Endothelial cell of umbilical vein (primary cell): ENCODE measurements at regions of chr2 and their contacts with region 1.

Region 1: DNA sequence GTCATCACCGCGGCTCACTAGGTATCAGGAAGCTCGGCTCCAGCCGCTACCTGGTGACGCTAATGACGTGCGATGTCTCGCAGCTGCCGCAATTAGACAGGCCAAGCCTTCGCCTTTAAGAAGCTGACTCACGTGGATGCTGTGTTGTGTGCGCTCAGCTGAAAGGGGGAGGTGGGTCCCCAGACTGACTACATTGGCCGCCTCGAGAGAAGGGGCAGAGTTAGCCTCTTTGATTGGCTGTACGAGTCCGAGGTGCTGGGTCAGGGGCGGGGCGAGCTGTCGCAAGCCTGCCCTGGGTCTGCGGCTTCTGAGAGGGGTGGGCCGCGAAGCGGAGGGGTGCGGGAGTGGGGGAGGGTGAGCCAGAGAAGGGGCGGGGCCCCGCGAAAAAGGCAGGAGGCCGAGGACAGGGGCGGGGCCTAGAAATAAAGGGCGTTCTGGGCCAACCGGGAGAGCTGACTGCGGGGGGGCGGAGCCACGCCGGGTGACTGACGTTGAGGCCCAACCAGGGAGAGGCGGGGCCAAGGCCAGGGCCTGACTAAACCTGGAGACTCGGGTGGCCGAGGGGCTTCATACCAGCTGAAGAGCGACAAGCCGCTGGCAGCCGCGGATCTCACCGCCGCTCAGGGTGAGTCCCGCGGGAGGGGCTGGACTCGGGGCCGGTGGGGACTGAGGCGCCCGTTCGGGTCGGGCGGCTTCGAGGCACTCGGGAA is at the start of gene YPEL5:
- DNase-seq: peak; percentile 100
- H3K4me3 ChIP-seq: peak within 1 kb of the TSS; percentile 75 to 92 (median 80)
- H3K27ac ChIP-seq: peak within 1 kb of the TSS; percentile 87
- H3K4me1 ChIP-seq: peaks cover 30% of the 10 kb centered on the region
- H3K27me3 ChIP-seq: peaks cover 1 to 7% of the 10 kb centered on the region in 2 experiments
- CTCF ChIP-seq: no peak
- POLR2A ChIP-seq: peak; percentile 66
- total RNA-seq, gene YPEL5: 59.3 and 62.0 TPM in 2 replicates

Region 2: GRCh38 chr2:29878898-29879297 is 267.7 kb before region 1 on chr2:
- CTCF ChIA-PET with region 1: no interaction called
- POLR2A ChIA-PET with region 1: no interaction called
- dilution Hi-C with region 1: no loop called
- intact Hi-C with region 1: no loop called
- DNase-seq: no peak
- H3K4me3 ChIP-seq: no peak overlapping the region
- H3K27ac ChIP-seq: no peak overlapping the region
- H3K4me1 ChIP-seq: no peaks in the 10 kb centered on the region
- H3K27me3 ChIP-seq: no peaks in the 10 kb centered on the region
- CTCF ChIP-seq: no peak
- POLR2A ChIP-seq: no peak

Region 3: DNA sequence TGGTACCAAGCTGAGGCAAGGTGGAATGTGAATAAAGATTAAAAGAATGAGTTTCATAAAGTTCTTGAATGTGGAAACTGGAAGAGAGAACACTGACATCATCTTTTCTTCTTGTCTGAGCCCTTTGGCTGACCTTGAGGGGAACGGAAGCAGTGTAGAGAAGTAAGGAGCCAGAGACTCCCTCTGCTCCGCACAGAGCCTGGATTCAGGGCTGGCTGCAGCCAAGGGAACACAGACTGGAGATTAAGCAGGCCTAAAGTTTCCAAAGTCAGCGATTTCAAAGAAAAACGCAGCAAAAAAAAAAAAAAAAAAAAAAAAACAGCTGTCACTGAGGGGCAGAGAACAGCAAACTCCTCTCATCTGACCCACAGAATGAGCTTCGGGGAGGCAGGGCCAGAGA is 205.9 kb before region 1 on chr2:
- CTCF ChIA-PET with region 1: no interaction called
- POLR2A ChIA-PET with region 1: interaction called, 10 read pairs
- dilution Hi-C with region 1: no loop called
- intact Hi-C with region 1: no loop called
- DNase-seq: no peak
- H3K4me3 ChIP-seq: no peak overlapping the region
- H3K27ac ChIP-seq: no peak overlapping the region
- H3K4me1 ChIP-seq: no peaks in the 10 kb centered on the region
- H3K27me3 ChIP-seq: no peaks in the 10 kb centered on the region
- CTCF ChIP-seq: no peak
- POLR2A ChIP-seq: no peak

Region 4: GRCh38 chr2:30208452-30208851 is 61.9 kb after region 1 on chr2:
- CTCF ChIA-PET with region 1: no interaction called
- POLR2A ChIA-PET with region 1: no interaction called
- dilution Hi-C with region 1: no loop called
- intact Hi-C with region 1: no loop called
- DNase-seq: peak; percentile 69
- H3K4me3 ChIP-seq: no peak overlapping the region
- H3K27ac ChIP-seq: no peak overlapping the region
- H3K4me1 ChIP-seq: no peaks in the 10 kb centered on the region
- H3K27me3 ChIP-seq: peaks cover 0 to 2% of the 10 kb centered on the region in 2 experiments
- CTCF ChIP-seq: peak; percentile 80 to 85
- POLR2A ChIP-seq: no peak

Region 5: GRCh38 chr2:30231212-30231995 is 84.8 kb after region 1 on chr2 and contains the start of gene LBH:
- CTCF ChIA-PET with region 1: interaction called, 3 read pairs
- POLR2A ChIA-PET with region 1: interaction called, 6 read pairs
- dilution Hi-C with region 1: no loop called
- intact Hi-C with region 1: loop called (anchors 5 kb)
- DNase-seq: peak; percentile 72
- H3K4me3 ChIP-seq: peak within 1 kb of the TSS; percentile 51 to 58 (median 53)
- H3K27ac ChIP-seq: no peak within 1 kb of the TSS
- H3K4me1 ChIP-seq: peaks cover 9% of the 10 kb centered on the region
- H3K27me3 ChIP-seq: peaks cover 21 to 22% of the 10 kb centered on the region in 2 experiments
- CTCF ChIP-seq: peak in 1 of 2 donors; percentile 3
- POLR2A ChIP-seq: peak; percentile 86
- total RNA-seq, gene LBH: 2.9 and 5.5 TPM in 2 replicates

Region 6: DNA sequence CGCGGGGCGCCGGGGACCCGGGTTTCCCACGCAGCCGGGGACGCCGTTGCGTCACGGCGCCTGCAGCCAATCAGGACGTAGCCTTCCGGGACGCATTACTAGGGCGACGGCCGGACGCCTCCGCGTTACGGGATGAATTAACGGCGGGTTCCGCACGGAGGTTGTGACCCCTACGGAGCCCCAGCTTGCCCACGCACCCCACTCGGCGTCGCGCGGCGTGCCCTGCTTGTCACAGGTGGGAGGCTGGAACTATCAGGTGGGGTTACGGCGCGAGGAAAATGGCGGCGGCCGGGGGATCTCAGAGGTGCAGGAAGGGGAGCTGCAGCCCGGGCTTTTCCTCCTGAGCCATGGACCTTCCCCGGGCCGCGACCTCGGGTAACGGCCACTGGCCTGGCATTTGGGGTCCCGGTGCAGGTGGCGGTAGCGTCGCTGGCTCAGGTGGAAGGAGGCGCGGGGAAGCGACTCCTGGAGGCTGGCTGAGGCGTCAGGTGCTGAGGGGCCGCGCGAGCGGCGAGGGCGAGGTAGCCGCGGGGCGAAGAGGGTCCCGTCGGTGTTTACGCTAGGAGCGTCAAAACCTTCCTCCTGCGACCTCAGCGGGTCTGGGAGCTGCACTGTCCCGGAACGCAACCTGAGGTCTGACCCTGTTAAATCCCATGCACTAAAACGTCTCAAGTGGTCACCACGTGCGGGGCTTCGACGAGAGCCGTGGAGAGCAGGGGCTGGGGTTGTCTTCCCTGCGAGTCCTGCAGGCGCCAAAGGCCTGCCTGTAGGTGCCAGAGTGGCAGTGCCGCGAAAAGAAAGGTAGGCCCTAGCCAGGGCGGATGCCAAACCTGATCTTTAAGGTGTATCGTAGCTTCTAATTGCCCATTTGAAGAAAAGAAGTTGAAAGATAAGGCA is 300.8 kb after region 1 on chr2 and contains the start of gene LCLAT1:
- CTCF ChIA-PET with region 1: no interaction called
- POLR2A ChIA-PET with region 1: no interaction called
- dilution Hi-C with region 1: no loop called
- intact Hi-C with region 1: loop called (anchors 5 kb)
- DNase-seq: peak; percentile 79
- H3K4me3 ChIP-seq: peak within 1 kb of the TSS; percentile 89 to 91 (median 90)
- H3K27ac ChIP-seq: peak within 1 kb of the TSS; percentile 83
- H3K4me1 ChIP-seq: peaks cover 13% of the 10 kb centered on the region
- H3K27me3 ChIP-seq: no peaks in the 10 kb centered on the region
- CTCF ChIP-seq: no peak
- POLR2A ChIP-seq: peak; percentile 18
- total RNA-seq, gene LCLAT1: 17.1 and 20.8 TPM in 2 replicates